Calu3 (cell line): ENCODE measurements at regions of chrX and their contacts with region 1.

Region 1: GRCh38 chrX:10189317-10190268 is 32.8 kb downstream of the CLCN4 start:
- DNase-seq: peak; percentile 76
- H3K4me3 Mint-ChIP-seq: no peak overlapping the region
- H3K27ac Mint-ChIP-seq: peak overlapping the region; percentile 73
- H3K4me1 Mint-ChIP-seq: peaks cover 8% of the 10 kb centered on the region
- H3K27me3 Mint-ChIP-seq: no peaks in the 10 kb centered on the region
- CTCF ChIP-seq: peak; percentile 80

Region 2: GRCh38 chrX:10326578-10326977 is 137.0 kb after region 1 on chrX:
- CTCF ChIA-PET with region 1: no interaction called
- intact Hi-C with region 1: loop called (anchors 1 kb)
- DNase-seq: peak; percentile 30
- H3K4me3 Mint-ChIP-seq: no peak overlapping the region
- H3K27ac Mint-ChIP-seq: no peak overlapping the region
- H3K4me1 Mint-ChIP-seq: peaks cover 14% of the 10 kb centered on the region
- H3K27me3 Mint-ChIP-seq: no peaks in the 10 kb centered on the region
- CTCF ChIP-seq: no peak

Region 3: GRCh38 chrX:10615931-10616775 is 426.6 kb after region 1 on chrX:
- CTCF ChIA-PET with region 1: interaction called, 4 read pairs
- intact Hi-C with region 1: loop called (anchors 5 kb)
- DNase-seq: peak; percentile 56
- H3K4me3 Mint-ChIP-seq: peak overlapping the region; percentile 89
- H3K27ac Mint-ChIP-seq: peak overlapping the region; percentile 85
- H3K4me1 Mint-ChIP-seq: peaks cover 44% of the 10 kb centered on the region
- H3K27me3 Mint-ChIP-seq: no peaks in the 10 kb centered on the region
- CTCF ChIP-seq: peak; percentile 30

Region 4: DNA sequence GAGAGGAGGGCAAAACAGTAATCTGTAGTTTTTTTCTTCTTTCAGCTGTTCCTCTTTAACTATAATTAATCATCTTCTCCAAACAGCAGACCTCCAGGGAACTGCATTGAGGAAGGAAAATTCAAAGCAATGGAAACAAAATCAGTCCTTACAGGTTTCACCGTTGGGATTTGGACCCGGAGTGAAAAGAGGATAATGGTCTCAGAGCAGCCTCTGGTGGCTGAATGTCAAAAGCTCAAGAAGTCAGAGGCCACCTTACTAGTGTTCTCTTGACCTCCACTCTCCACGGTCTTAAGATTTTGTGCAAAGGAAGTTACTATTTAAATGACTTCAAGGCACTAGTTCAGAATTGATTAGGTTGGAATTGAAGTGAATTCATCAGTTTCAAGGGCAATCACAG is 446.7 kb after region 1 on chrX:
- CTCF ChIA-PET with region 1: interaction called, 7 read pairs
- intact Hi-C with region 1: loop called (anchors 1 kb)
- DNase-seq: peak; percentile 56
- H3K4me3 Mint-ChIP-seq: peak overlapping the region; percentile 28
- H3K27ac Mint-ChIP-seq: peak overlapping the region; percentile 75
- H3K4me1 Mint-ChIP-seq: peaks cover 22% of the 10 kb centered on the region
- H3K27me3 Mint-ChIP-seq: no peaks in the 10 kb centered on the region
- CTCF ChIP-seq: peak; percentile 28

Region 5: GRCh38 chrX:10722851-10723250 is 533.3 kb after region 1 on chrX:
- CTCF ChIA-PET with region 1: interaction called, 4 read pairs
- intact Hi-C with region 1: loop called (anchors 1 kb)
- DNase-seq: peak; percentile 66
- H3K4me3 Mint-ChIP-seq: no peak overlapping the region
- H3K27ac Mint-ChIP-seq: no peak overlapping the region
- H3K4me1 Mint-ChIP-seq: peaks cover 6% of the 10 kb centered on the region
- H3K27me3 Mint-ChIP-seq: no peaks in the 10 kb centered on the region
- CTCF ChIP-seq: no peak

Region 6: DNA sequence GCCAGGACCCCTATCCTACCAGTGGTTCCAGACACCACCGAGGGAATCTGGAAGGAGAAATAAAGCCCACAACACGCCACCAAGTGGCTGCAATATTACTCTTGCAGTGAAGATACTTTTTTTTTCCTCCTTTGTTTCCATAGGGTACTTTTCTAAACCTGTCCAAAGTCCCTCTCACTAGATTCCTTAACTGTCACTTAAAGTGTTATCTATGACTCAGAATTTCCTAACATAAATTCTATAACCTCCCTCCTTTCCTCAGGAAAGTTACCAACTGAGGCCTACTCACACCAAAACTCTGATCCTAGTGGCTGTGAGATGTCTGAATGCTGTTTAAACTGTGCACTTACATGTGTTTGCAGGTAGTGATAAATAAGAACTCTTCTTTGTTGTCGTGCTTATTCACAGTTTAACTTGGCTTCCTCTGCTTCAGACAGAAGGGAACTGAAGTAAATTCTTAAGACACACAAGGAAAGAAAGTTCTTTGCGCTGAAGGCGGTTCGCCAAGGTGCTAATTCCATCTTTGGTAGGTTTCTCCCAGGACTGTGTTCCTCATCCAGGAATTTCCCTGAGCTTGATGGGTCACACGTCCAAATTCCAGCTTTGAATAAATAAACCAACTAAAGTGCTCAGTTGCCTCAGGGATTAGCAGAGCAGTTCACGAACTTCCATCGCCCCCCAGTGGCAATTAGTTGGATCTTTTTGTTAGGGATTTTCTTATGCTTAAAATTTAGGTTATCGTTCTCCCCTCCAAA is 910.9 kb after region 1 on chrX:
- CTCF ChIA-PET with region 1: no interaction called
- intact Hi-C with region 1: loop called (anchors 1 kb)
- DNase-seq: peak; percentile 34
- H3K4me3 Mint-ChIP-seq: no peak overlapping the region
- H3K27ac Mint-ChIP-seq: peak overlapping the region; percentile 20
- H3K4me1 Mint-ChIP-seq: peaks cover 8% of the 10 kb centered on the region
- H3K27me3 Mint-ChIP-seq: no peaks in the 10 kb centered on the region
- CTCF ChIP-seq: no peak

Region 7: DNA sequence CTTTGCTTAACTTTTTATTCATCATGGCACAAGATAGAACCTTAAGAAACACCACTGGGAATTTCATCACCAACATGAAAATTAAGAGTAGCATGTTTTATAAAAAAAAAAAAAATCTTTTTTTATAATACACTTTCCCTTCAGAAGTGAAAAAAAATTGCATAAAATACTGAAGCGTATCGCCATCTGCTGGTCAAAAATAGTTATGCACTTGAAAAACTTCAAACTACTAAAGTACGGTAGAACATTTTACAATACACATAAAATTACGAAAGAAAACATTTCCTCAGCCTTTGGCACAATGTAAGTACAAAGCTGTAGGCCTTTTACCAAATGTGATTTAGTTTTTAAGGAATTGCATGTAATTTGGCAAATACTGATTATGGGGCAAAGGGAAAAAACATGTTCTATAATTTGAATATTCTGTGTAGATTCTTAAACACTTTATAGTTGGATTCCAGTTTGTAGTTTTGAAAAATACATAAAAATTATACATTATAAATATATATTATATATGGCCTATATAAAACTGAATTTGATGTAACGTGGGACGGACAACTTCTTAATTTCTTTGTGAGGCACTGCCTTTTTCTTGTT is 948.0 kb after region 1 on chrX:
- CTCF ChIA-PET with region 1: no interaction called
- intact Hi-C with region 1: loop called (anchors 1 kb)
- DNase-seq: peak; percentile 4
- H3K4me3 Mint-ChIP-seq: no peak overlapping the region
- H3K27ac Mint-ChIP-seq: no peak overlapping the region
- H3K4me1 Mint-ChIP-seq: no peaks in the 10 kb centered on the region
- H3K27me3 Mint-ChIP-seq: no peaks in the 10 kb centered on the region
- CTCF ChIP-seq: no peak